ENCODE measurements at regions of chr20 and their contacts with region 1.

Region 1: DNA sequence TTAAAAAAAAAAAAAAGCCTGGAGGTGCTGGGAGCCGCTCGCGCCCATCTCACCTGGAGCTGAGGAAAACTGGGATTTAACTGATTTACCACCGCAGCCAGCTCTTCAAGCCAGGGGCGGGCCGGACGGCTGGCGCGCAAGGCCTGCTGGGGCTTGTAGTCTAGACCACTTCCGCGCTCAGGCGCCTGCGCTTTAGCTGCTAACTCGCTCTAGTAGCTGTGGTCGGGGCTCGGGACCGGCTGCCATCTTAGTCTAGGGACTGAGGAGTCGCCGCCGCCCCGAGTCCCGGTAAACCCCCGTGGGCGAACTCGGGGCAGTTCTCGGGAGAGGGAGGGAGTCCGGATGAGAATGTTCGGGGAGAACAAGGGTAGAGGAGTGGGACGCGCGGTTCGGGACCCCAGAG is at the start of gene ITCH:
- DNase-seq: peak; percentile 80 to 96 (median 93)
- ATAC-seq: peak; percentile 99
- H3K4me3 ChIP-seq: peak within 1 kb of the TSS; percentile 92 to 93
- H3K4me3 Mint-ChIP-seq: peak within 1 kb of the TSS; percentile 99
- H3K27ac ChIP-seq: peak within 1 kb of the TSS; percentile 86 to 91
- H3K27ac Mint-ChIP-seq: peak within 1 kb of the TSS; percentile 99
- H3K4me1 ChIP-seq: peaks cover 40% of the 10 kb centered on the region
- H3K4me1 Mint-ChIP-seq: peaks cover 45% of the 10 kb centered on the region
- H3K27me3 ChIP-seq: no peaks in the 10 kb centered on the region
- H3K27me3 Mint-ChIP-seq: no peaks in the 10 kb centered on the region
- CTCF ChIP-seq: no peak
- total RNA-seq, gene ITCH: 50.4 to 55.2 TPM

Region 2: DNA sequence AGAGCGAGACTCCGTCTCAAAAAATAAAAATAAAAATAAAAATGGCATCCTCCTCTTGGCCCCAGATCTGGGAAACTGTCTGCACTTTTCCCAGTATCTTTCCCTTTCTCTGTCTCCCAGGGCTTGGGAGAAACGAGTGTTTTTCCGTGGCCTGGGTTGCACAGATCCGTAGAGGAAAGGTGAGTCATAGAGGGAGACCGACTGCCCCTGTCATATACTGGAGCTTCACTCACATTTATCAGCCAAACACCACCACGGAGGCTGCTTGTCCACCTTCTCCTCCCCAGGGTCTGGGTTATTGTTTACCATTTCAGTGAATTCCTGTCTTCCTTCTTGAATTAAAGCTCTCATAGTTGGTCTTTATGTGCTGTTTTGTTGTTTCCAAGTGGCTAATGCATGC is 219.1 kb before region 1 on chr20:
- CTCF ChIA-PET with region 1: no interaction called
- POLR2A ChIA-PET with region 1: no interaction called
- intact Hi-C with region 1: no loop called
- DNase-seq: no peak
- ATAC-seq: no peak
- H3K4me3 ChIP-seq: no peak overlapping the region
- H3K4me3 Mint-ChIP-seq: no peak overlapping the region
- H3K27ac ChIP-seq: no peak overlapping the region
- H3K27ac Mint-ChIP-seq: no peak overlapping the region
- H3K4me1 ChIP-seq: no peaks in the 10 kb centered on the region
- H3K4me1 Mint-ChIP-seq: no peaks in the 10 kb centered on the region
- H3K27me3 ChIP-seq: no peaks in the 10 kb centered on the region
- H3K27me3 Mint-ChIP-seq: peaks cover 9% of the 10 kb centered on the region
- CTCF ChIP-seq: no peak

Region 3: GRCh38 chr20:34676642-34677373 is 313.7 kb after region 1 on chr20 and contains the start of gene PIGU:
- CTCF ChIA-PET with region 1: no interaction called
- POLR2A ChIA-PET with region 1: no interaction called
- intact Hi-C with region 1: loop called (anchors 1 to 2 kb)
- DNase-seq: peak; percentile 92 to 98 (median 96)
- ATAC-seq: peak; percentile 96
- H3K4me3 ChIP-seq: peak within 1 kb of the TSS; percentile 80 to 94
- H3K4me3 Mint-ChIP-seq: peak within 1 kb of the TSS; percentile 97
- H3K27ac ChIP-seq: peak within 1 kb of the TSS; percentile 83 to 90
- H3K27ac Mint-ChIP-seq: peak within 1 kb of the TSS; percentile 96
- H3K4me1 ChIP-seq: peaks cover 16% of the 10 kb centered on the region
- H3K4me1 Mint-ChIP-seq: peaks cover 22% of the 10 kb centered on the region
- H3K27me3 ChIP-seq: no peaks in the 10 kb centered on the region
- H3K27me3 Mint-ChIP-seq: no peaks in the 10 kb centered on the region
- CTCF ChIP-seq: no peak
- total RNA-seq, gene PIGU: 3.3 to 5.2 TPM